ENCODE measurements at regions of chrX and their contacts with region 1.

Region 1: GRCh38 chrX:141278302-141278701 is 36.0 kb upstream of the SPANXC start:
- DNase-seq: no peak
- H3K4me3 Mint-ChIP-seq: no peak overlapping the region
- H3K27ac Mint-ChIP-seq: no peak overlapping the region
- H3K4me1 Mint-ChIP-seq: no peaks in the 10 kb centered on the region
- H3K27me3 Mint-ChIP-seq: no peaks in the 10 kb centered on the region

Region 2: GRCh38 chrX:140389331-140389730 is 889.0 kb before region 1 on chrX:
- intact Hi-C with region 1: no loop called
- DNase-seq: no peak
- H3K4me3 Mint-ChIP-seq: no peak overlapping the region
- H3K27ac Mint-ChIP-seq: no peak overlapping the region
- H3K4me1 Mint-ChIP-seq: no peaks in the 10 kb centered on the region
- H3K27me3 Mint-ChIP-seq: no peaks in the 10 kb centered on the region

Region 3: GRCh38 chrX:140762061-140762460 is 516.2 kb before region 1 on chrX:
- intact Hi-C with region 1: loop called (anchors 2 kb)
- DNase-seq: no peak
- H3K4me3 Mint-ChIP-seq: no peak overlapping the region
- H3K27ac Mint-ChIP-seq: no peak overlapping the region
- H3K4me1 Mint-ChIP-seq: no peaks in the 10 kb centered on the region
- H3K27me3 Mint-ChIP-seq: peaks cover 12% of the 10 kb centered on the region

Region 4: DNA sequence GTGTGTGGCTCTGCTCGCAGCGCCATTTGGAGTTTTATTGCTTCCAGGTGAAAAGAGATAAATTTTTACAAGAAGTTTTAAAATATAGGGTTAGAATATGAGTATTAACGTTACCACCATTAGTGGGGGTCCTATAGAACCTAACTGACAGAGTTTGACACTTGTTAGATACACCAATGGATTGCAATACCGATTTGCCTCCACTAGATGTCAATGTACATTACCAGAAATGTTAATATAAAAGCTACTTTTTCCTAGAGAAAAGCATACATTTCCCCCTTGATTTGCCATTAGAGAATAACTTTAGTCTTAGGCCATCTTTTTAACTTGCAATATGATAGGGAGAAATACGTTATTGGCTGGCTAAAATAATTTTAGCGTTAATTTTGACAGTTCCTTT is 460.4 kb before region 1 on chrX:
- intact Hi-C with region 1: loop called (anchors 2 kb)
- DNase-seq: no peak
- H3K4me3 Mint-ChIP-seq: no peak overlapping the region
- H3K27ac Mint-ChIP-seq: no peak overlapping the region
- H3K4me1 Mint-ChIP-seq: peaks cover 7% of the 10 kb centered on the region
- H3K27me3 Mint-ChIP-seq: no peaks in the 10 kb centered on the region

Region 5: DNA sequence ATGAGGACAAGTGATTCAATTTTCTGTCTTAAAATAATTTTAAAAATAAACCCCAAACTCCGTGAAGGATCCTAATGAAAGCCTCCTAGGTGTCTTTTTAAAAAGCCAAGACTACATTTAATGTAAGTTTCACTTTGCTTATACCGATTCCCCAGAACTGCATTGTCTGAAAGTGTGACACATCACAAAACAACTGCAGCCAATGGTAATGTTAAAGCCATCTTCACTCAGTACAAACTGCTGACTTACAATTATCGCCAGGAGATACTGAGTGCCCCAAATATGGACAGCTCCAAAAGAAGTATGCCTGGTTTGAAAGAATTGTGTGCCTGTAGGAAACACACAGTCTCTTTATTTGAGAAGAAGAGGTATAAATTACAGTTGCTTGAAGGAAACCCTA is 349.6 kb before region 1 on chrX:
- intact Hi-C with region 1: loop called (anchors 10 kb)
- DNase-seq: no peak
- H3K4me3 Mint-ChIP-seq: no peak overlapping the region
- H3K27ac Mint-ChIP-seq: no peak overlapping the region
- H3K4me1 Mint-ChIP-seq: peaks cover 2% of the 10 kb centered on the region
- H3K27me3 Mint-ChIP-seq: no peaks in the 10 kb centered on the region

Region 6: DNA sequence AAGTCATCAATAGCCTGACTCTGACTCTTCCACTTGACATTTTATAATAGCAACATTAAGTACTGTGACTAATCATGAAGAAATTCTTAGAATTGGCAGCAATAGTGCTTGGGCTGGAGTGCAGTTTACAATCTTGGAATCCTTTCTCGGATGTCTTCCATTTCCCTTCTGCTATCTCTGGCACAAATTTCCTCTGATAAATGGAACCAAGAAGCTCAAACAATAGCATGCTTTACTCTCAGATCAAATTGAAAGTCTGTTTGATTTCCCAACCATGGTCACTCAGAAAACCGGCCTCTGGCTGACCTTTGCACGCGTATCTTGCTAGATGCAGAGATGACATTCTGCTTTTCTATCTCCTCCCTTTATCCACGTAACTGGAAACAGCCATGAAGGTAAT is 63.0 kb after region 1 on chrX:
- intact Hi-C with region 1: no loop called
- DNase-seq: no peak
- H3K4me3 Mint-ChIP-seq: no peak overlapping the region
- H3K27ac Mint-ChIP-seq: no peak overlapping the region
- H3K4me1 Mint-ChIP-seq: no peaks in the 10 kb centered on the region
- H3K27me3 Mint-ChIP-seq: no peaks in the 10 kb centered on the region

Region 7: GRCh38 chrX:142134533-142134932 is 856.2 kb after region 1 on chrX:
- intact Hi-C with region 1: no loop called
- DNase-seq: no peak
- H3K4me3 Mint-ChIP-seq: no peak overlapping the region
- H3K27ac Mint-ChIP-seq: no peak overlapping the region
- H3K4me1 Mint-ChIP-seq: no peaks in the 10 kb centered on the region
- H3K27me3 Mint-ChIP-seq: no peaks in the 10 kb centered on the region

Measured in activated T-helper 2 cell treated with anti-CD3 and anti-CD28 coated beads, Interferon-gamma antibody, Interleukin-2, Interleukin-4, amounts not matched to agents 10 μg/mL and 5 μg/mL and 100 μg/mL, durations not matched to agents 14 hours and 24 hours and 36 hours (primary cell).